ENCODE measurements at regions of chr1 and their contacts with region 1.

Region 1: DNA sequence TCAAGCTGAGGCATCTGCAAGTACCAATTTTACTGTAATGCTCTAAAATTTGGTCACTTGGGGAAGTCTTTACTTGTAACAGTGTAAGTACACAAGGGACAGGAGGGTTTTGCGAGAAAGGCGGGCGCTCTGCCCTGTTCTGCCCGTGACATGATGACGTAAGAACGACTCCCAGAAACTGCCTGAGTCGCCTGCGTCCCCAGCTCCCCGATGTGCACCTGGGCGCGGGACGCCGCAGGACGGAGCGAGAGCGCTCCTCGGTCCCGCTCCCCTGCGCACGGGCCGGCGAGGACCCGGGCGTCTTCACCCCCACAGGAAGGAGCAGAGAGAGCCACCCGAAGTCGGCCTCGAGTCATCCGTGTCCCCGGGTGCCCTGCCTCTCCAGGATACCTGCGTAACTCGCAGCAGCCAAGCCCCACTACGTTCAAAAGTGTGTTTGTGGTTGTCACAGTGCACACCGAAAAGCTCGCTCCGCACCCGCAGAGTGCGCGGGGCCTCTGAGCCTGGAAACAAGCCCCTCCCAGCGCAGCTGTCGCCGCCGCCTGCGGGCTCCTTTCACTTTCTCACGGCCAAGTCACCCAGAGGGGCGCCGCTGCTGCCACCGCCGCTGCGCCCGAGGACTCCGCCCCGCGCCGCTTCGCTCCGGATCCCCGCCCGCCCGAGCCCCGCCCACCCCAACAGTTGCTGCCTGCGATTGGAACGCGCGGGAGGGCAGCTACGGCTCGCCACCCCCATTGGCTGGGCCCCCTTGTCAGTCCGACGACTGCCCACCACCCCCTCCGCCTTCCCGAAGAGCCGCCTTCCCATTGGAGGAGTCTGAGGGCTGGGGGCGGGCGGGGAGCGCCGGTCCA is 3.2 kb upstream of the ZBTB18 start:
- DNase-seq: peak; percentile 100
- H3K4me3 Mint-ChIP-seq: peak overlapping the region; percentile 94
- H3K27ac Mint-ChIP-seq: peak overlapping the region; percentile 87
- H3K4me1 Mint-ChIP-seq: peaks cover 32% of the 10 kb centered on the region
- H3K27me3 Mint-ChIP-seq: peaks cover 13% of the 10 kb centered on the region
- CTCF ChIP-seq: no peak

Region 2: GRCh38 chr1:243343970-243344937 is 703.6 kb before region 1 on chr1:
- CTCF ChIA-PET with region 1: interaction called, 4 read pairs
- POLR2A ChIA-PET with region 1: interaction called, 3 read pairs
- intact Hi-C with region 1: loop called (anchors 2 kb)
- DNase-seq: peak; percentile 79
- H3K4me3 Mint-ChIP-seq: no peak overlapping the region
- H3K27ac Mint-ChIP-seq: no peak overlapping the region
- H3K4me1 Mint-ChIP-seq: peaks cover 5% of the 10 kb centered on the region
- H3K27me3 Mint-ChIP-seq: no peaks in the 10 kb centered on the region
- CTCF ChIP-seq: peak; percentile 91

Region 3: GRCh38 chr1:243731301-243731891 is 316.4 kb before region 1 on chr1:
- CTCF ChIA-PET with region 1: no interaction called
- POLR2A ChIA-PET with region 1: no interaction called
- intact Hi-C with region 1: no loop called
- DNase-seq: no peak
- H3K4me3 Mint-ChIP-seq: no peak overlapping the region
- H3K27ac Mint-ChIP-seq: no peak overlapping the region
- H3K4me1 Mint-ChIP-seq: peaks cover 5% of the 10 kb centered on the region
- H3K27me3 Mint-ChIP-seq: no peaks in the 10 kb centered on the region
- CTCF ChIP-seq: no peak

Region 4: DNA sequence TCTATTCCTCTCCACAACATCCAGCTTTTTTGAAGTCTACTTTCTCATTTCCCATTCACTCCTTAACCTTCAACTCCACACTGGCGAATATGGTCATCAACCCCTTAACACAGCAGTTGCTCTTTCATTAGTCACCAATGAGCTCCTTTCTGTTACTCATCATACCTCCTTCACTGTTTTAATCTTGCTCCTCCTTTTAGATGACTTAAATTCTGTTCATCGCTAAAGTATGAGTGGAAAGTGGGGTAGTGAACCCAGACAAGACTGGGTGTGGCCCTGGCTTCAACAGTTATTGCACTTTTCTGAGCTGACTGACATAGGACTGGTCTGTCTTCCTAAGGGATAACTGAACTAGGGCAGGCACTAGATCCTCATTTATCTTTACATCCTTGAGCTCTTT is 249.1 kb before region 1 on chr1:
- CTCF ChIA-PET with region 1: no interaction called
- POLR2A ChIA-PET with region 1: interaction called, 8 read pairs
- intact Hi-C with region 1: loop called (anchors 10 kb)
- DNase-seq: peak; percentile 86
- H3K4me3 Mint-ChIP-seq: no peak overlapping the region
- H3K27ac Mint-ChIP-seq: peak overlapping the region; percentile 0
- H3K4me1 Mint-ChIP-seq: peaks cover 24% of the 10 kb centered on the region
- H3K27me3 Mint-ChIP-seq: no peaks in the 10 kb centered on the region
- CTCF ChIP-seq: no peak

Region 5: GRCh38 chr1:243882276-243882675 is 165.6 kb before region 1 on chr1:
- CTCF ChIA-PET with region 1: no interaction called
- POLR2A ChIA-PET with region 1: no interaction called
- intact Hi-C with region 1: no loop called
- DNase-seq: peak; percentile 50
- H3K4me3 Mint-ChIP-seq: no peak overlapping the region
- H3K27ac Mint-ChIP-seq: no peak overlapping the region
- H3K4me1 Mint-ChIP-seq: no peaks in the 10 kb centered on the region
- H3K27me3 Mint-ChIP-seq: peaks cover 21% of the 10 kb centered on the region
- CTCF ChIP-seq: no peak

Region 6: GRCh38 chr1:244021947-244022700 is 25.7 kb before region 1 on chr1:
- CTCF ChIA-PET with region 1: no interaction called
- POLR2A ChIA-PET with region 1: interaction called, 18 read pairs
- intact Hi-C with region 1: no loop called
- DNase-seq: peak; percentile 98
- H3K4me3 Mint-ChIP-seq: no peak overlapping the region
- H3K27ac Mint-ChIP-seq: peak overlapping the region; percentile 73
- H3K4me1 Mint-ChIP-seq: peaks cover 12% of the 10 kb centered on the region
- H3K27me3 Mint-ChIP-seq: peaks cover 6% of the 10 kb centered on the region
- CTCF ChIP-seq: no peak

Region 7: GRCh38 chr1:244065960-244066388 is 18.1 kb after region 1 on chr1:
- CTCF ChIA-PET with region 1: interaction called, 5 read pairs
- POLR2A ChIA-PET with region 1: interaction called, 27 read pairs
- intact Hi-C with region 1: no loop called
- DNase-seq: peak; percentile 45
- H3K4me3 Mint-ChIP-seq: no peak overlapping the region
- H3K27ac Mint-ChIP-seq: no peak overlapping the region
- H3K4me1 Mint-ChIP-seq: peaks cover 5% of the 10 kb centered on the region
- H3K27me3 Mint-ChIP-seq: no peaks in the 10 kb centered on the region
- CTCF ChIP-seq: no peak

Region 8: GRCh38 chr1:244302889-244303613 is 255.2 kb after region 1 on chr1:
- CTCF ChIA-PET with region 1: interaction called, 10 read pairs
- POLR2A ChIA-PET with region 1: interaction called, 4 read pairs
- intact Hi-C with region 1: no loop called
- DNase-seq: peak; percentile 77
- H3K4me3 Mint-ChIP-seq: no peak overlapping the region
- H3K27ac Mint-ChIP-seq: peak overlapping the region; percentile 11
- H3K4me1 Mint-ChIP-seq: peaks cover 40% of the 10 kb centered on the region
- H3K27me3 Mint-ChIP-seq: no peaks in the 10 kb centered on the region
- CTCF ChIP-seq: no peak

Measured in MCF 10A (cell line).